ENCODE measurements at regions of chr17 and their contacts with region 1.

Region 1: DNA sequence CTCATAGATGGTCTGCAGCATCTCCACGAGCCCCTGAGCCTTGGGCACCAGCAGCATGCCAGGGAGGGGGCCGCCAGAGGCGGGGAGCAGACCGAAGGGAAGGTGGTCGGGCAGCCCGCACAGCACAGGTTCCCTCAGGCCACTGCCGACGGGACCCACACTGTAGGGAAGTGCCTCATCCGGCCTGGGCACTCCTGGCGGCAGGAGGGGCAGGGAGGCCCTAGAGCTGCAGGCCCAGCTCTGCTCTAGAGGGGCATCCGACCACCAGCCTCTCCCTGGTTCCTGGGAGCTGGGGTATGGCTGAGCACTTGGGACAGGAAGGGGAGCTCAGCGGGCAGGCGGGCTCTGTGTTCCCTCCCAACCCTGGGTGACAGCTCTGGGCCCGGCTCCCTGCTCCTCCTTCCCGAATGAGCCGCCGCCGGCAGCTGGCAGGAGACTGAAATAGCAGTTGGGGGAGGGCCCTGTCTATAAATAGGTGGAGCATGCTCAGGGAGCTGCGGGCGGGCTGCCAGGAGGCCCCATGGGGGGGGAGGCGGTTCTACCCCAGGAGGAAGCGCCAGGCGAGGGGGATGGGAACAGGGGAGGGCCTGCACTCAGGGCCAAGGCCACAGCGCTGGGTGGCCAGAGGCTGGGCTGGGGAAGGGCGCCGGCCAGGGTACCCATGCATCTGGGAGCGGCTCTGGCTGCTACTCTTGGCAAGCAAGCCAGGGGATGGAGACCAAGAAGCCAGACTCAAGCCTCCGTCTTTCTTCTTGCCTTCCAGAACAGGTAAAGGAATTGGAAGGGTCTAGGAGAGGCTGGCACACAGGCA is 12.4 kb downstream of the HDAC5 start:
- DNase-seq: peak; percentile 63
- H3K4me3 ChIP-seq: peak overlapping the region; percentile 67
- CTCF ChIP-seq: peak; percentile 6

Region 2: GRCh38 chr17:44061446-44061845 is 49.6 kb before region 1 on chr17:
- CTCF ChIA-PET with region 1: interaction called, 16 read pairs
- POLR2A ChIA-PET with region 1: no interaction called
- DNase-seq: no peak
- H3K4me3 ChIP-seq: no peak overlapping the region
- CTCF ChIP-seq: no peak

Region 3: GRCh38 chr17:44070455-44071197 is 40.4 kb before region 1 on chr17 and contains the start of gene G6PC3:
- CTCF ChIA-PET with region 1: interaction called, 19 read pairs
- POLR2A ChIA-PET with region 1: interaction called, 3 read pairs
- DNase-seq: peak; percentile 89
- H3K4me3 ChIP-seq: peak within 1 kb of the TSS; percentile 81
- CTCF ChIP-seq: peak; percentile 6

Region 4: DNA sequence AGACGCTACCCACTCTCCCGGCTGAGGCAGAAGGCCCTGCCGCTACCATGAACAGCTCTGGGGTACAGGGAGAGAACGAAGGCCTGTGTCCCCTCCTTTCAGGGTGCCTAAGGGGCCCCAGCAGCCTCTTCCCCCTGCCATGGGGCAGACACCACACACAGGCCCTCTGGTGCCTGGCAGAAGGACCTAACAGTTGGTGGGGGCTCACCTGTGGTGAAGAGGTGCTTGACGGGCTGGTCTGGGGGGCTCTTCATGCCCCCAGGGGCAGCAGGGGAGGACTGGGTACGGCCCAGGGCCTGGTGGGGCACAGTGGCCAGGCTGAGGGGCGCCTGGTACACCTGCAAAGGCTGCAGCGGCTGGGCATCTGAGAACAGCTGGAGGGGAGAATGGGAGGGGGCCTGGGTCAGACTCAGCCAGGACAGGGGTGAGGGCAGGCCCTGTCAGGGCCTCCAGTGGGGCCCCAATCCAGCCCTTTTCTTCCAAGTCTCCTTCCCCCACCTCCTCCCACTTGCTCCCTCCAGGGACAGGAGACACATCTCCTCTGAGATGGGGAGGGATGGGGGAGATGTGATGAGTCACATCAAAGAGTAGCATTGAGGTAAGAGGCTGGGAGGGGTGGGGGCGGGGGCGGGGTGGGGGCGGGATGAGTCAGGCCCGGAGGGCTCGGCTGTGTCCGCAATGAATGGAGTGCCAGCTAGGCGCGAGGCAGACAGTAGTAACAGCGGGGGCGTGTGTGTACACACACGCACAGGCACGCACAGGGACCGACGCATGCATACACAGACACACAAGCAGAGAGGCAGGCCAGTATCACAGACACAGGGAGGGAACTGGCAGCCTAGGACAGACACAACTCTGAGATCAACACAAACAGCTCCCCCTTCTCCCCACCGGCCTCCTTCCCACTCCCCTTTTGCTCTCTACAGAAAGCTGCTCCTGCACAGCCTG is 24.4 kb before region 1 on chr17:
- CTCF ChIA-PET with region 1: interaction called, 21 read pairs
- POLR2A ChIA-PET with region 1: interaction called, 6 read pairs
- DNase-seq: no peak
- H3K4me3 ChIP-seq: peak overlapping the region; percentile 8
- CTCF ChIP-seq: no peak

Region 5: DNA sequence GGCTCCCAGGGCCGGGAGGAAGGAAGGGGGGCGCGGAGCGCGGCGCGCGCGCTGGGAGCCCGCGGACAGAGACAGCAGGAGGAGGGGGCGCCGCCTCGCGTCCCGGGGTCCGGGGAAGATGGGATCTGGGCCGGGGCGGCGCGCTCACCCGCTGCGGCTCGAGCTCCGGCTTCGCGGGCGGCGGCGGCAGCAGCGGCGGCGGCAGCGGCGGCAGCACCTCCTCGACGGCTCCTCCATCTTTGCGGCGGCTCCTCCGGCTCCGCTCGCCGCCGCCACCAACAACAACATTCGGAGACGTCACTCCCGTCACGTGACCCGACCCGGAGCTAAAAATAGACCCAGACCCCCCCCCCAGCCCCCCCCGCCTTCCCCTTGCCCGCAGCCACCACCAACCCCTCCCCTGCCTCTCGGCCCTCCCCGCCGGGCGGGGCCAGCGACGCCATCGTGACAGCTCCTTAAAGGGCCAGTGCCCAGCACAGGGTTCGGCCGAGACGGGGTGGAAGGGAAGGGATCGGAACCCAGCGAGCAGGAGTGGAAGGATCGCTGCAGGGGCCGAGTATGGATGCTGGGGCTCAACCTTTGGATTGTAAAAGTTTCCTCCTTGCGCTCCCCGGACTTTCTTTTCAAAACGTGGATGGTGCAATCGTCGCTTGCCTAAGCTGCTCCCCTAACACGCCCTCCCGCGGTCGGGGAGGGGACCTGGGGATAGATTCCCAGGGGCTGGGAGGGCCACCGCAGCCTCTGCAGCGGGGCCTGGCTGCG is 12.5 kb after region 1 on chr17 and contains the start of gene HDAC5:
- CTCF ChIA-PET with region 1: interaction called, 66 read pairs
- POLR2A ChIA-PET with region 1: interaction called, 8 read pairs
- DNase-seq: peak; percentile 46
- H3K4me3 ChIP-seq: peak within 1 kb of the TSS; percentile 76
- CTCF ChIP-seq: peak; percentile 74

Region 6: DNA sequence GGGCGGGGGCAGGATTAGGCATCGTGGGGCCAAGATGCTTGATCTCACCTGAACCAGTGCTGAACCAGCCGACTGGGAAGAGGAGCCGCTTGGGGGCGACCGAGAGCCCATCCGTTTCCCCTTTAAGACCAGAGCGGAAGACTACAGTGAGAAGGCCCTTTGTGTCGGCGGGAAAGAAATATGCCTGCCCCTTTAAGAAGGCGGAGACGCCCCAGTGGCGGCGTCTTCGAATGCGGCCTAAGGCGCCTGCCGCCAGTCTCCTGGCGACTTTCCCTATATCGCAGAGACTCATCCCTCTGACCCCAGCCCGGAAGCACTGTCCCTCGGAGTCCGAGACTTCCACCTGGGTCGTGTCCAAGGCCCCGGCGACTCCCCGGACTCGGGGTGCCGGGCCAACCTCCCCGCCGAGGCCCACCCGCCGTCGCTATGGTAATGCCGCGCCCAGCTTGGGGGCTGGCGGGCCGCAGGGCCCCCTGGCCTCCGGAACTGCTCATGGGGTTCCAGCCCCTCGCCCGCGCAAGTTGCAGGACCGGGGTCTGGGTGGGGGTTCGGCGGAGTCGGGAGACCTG is 30.8 kb after region 1 on chr17 and contains the start of gene HROB:
- CTCF ChIA-PET with region 1: interaction called, 16 read pairs
- POLR2A ChIA-PET with region 1: interaction called, 6 read pairs
- DNase-seq: peak; percentile 87
- H3K4me3 ChIP-seq: peak within 1 kb of the TSS; percentile 77
- CTCF ChIP-seq: peak; percentile 92

Region 7: DNA sequence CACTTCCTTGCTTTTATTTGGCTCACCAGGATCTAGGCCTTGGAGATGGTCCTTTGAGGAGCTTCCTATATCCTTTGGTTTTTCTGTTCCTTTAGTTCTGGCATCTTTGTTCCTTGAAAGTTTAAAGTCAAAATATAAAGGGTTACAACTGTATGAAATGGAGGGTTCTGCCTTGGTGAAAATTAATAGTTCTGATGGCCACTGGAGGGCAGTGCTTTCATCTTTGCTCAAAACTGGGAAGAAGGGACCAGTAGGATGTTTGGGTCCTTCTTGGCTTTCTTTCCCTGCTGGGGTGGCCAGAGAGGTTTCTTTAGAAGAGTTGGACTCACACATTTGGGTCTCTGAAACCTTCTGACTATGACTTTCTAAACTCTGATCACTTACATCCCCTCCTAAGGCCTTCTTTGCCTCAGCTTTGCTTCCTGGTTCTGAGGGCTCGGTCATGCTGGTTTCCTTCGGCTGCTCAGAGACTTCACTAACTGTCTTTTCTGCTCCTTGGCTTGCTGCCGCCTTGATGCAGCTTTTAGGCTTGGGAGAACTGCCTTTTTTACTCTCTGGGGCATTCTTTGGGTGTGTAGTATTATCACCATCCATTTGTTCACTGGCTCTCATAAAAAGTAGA is 289.3 kb after region 1 on chr17:
- CTCF ChIA-PET with region 1: no interaction called
- POLR2A ChIA-PET with region 1: no interaction called
- DNase-seq: no peak
- H3K4me3 ChIP-seq: no peak overlapping the region
- CTCF ChIP-seq: peak; percentile 41